IMR-90 (cell line): ENCODE measurements at regions of chr2 and their contacts with region 1.

Region 1: DNA sequence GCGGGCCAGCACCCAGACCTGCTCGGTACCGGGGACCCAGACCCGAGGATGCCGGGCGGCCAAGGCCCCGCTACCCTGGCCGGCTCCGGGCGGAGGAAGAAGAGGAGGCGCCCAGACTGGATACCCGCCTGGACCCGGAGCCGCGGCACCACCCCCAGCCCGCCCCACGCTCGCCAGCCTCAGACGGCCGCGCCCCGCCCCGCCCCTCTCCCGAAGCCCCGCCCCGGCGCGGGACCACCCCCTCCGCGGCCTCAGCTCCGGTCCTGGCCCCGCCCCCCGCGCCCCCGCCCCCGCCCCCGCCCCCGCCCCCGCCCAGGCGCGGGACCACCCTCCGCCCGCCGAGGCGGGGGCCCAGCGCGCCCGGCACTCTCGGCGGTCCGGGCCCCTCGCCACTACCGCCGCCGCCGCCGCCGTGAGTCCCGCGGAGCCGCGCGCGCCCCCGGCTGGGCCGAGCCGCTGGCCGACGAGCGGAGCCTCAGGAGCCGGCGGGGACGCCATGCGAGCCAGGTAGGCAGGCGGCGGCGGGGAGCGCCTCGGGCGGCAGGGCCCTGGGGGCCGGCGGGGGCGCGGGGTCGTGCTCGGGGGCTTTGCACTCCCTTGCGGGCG is at the start of gene SH3BP4:
- DNase-seq: peak; percentile 72
- ATAC-seq: peak; percentile 75
- H3K4me3 ChIP-seq: peak within 1 kb of the TSS; percentile 65
- H3K27ac ChIP-seq: peak within 1 kb of the TSS; percentile 99
- H3K4me1 ChIP-seq: peaks cover 33% of the 10 kb centered on the region
- H3K27me3 ChIP-seq: no peaks in the 10 kb centered on the region
- CTCF ChIP-seq: no peak
- POLR2A ChIP-seq: peak; percentile 91
- RAD21 ChIP-seq: peak; percentile 25; the same call in 1 of the 2 replicates
- total RNA-seq, gene SH3BP4: 112 and 122 TPM in 2 replicates

Region 2: DNA sequence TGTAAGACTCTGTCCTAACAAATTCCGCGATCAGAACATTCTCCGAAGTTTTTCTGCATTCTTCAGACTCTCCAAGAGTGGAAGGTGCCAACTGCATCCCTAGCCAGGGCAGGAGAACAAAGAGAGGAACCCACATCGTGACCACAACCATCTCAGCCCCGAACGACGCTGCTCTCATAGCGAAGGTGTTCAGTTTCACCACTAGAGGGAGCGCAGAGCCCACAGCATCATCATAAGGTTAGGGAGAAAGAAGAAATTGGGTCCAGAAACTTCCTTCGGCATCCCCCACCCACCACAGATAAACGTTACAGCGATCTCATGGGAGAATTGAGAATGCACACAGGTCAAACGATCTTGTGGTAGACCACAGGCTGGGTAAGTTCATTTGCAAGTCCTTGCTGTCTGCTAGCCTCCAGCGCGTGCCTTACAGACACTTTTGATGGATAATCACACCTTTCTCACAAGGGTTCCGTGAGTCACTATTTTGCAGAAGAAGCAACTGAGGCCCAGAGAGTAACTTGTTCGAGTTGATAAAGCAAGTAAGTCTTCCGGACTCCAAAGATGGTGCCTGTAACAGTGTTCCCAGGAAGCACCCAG is 401.2 kb before region 1 on chr2:
- CTCF ChIA-PET with region 1: no interaction called
- POLR2A ChIA-PET with region 1: no interaction called
- dilution Hi-C with region 1: no loop called
- in situ Hi-C with region 1: no loop called
- intact Hi-C with region 1: loop called (anchors 1 kb)
- DNase-seq: peak; percentile 86
- ATAC-seq: peak; percentile 96
- H3K4me3 ChIP-seq: no peak overlapping the region
- H3K27ac ChIP-seq: no peak overlapping the region
- H3K4me1 ChIP-seq: peaks cover 5% of the 10 kb centered on the region; the same call in 1 of the 2 replicates
- H3K27me3 ChIP-seq: no peaks in the 10 kb centered on the region; the same call in 1 of the 2 replicates
- CTCF ChIP-seq: peak; percentile 96
- POLR2A ChIP-seq: peak; percentile 47; the same call in 1 of the 2 replicates
- RAD21 ChIP-seq: peak; percentile 99

Region 3: DNA sequence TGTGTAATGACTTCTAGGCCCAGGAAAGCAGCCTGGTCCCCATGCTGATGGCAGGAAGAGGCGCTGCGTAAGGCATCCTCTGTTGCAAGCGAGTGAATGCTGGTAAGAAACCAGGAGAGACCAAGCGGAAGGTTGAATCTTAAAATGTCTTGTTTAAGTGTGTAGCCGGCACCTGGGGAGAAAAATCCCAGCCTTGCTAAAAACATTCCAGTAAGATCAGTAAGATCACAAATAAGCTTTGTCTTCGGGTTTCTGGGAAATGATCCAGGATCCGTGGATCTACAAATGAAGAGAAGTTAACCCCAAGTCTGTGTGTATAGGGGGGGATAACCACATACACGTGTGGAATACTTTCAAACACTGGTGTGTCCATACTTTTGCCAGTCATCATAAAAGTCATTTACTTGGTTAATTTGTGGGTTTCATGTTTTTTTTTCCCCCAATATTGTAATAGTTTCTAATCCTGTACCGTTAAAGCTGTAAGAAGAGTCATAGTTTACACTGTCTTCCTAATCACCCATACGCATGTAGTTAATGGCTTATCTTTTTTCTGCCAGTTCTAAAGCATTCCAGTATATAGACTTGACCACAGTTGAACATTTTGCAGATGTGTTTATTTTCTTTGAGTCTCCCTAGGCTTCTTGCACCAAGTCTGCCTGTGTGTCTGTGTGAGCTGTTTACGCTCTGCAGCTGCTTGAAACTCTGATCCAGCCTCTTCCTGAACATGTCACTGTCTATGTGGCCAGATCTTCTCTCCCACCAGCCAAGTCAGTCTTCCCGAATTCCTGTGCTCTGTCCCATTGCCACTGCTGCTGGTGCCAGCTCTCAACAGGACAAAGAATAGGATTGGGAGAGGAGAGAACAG is 319.0 kb before region 1 on chr2:
- CTCF ChIA-PET with region 1: no interaction called
- POLR2A ChIA-PET with region 1: no interaction called
- dilution Hi-C with region 1: no loop called
- in situ Hi-C with region 1: no loop called
- intact Hi-C with region 1: loop called (anchors 2 kb)
- DNase-seq: peak; percentile 100
- ATAC-seq: peak; percentile 91
- H3K4me3 ChIP-seq: no peak overlapping the region
- H3K27ac ChIP-seq: peak overlapping the region; percentile 97
- H3K4me1 ChIP-seq: peaks cover 33% of the 10 kb centered on the region
- H3K27me3 ChIP-seq: no peaks in the 10 kb centered on the region
- CTCF ChIP-seq: no peak
- POLR2A ChIP-seq: peak; percentile 48; the same call in 1 of the 2 replicates
- RAD21 ChIP-seq: no peak; the same call in 1 of the 2 replicates

Region 4: GRCh38 chr2:234679741-234680687 is 271.8 kb before region 1 on chr2:
- CTCF ChIA-PET with region 1: interaction called, 5 read pairs
- POLR2A ChIA-PET with region 1: interaction called, 8 read pairs
- dilution Hi-C with region 1: no loop called
- in situ Hi-C with region 1: no loop called
- intact Hi-C with region 1: loop called (anchors 2 kb)
- DNase-seq: peak; percentile 99
- ATAC-seq: peak; percentile 75
- H3K4me3 ChIP-seq: peak overlapping the region; percentile 5; the same call in 1 of the 2 replicates
- H3K27ac ChIP-seq: peak overlapping the region; percentile 90
- H3K4me1 ChIP-seq: peaks cover 34% of the 10 kb centered on the region
- H3K27me3 ChIP-seq: no peaks in the 10 kb centered on the region
- CTCF ChIP-seq: no peak
- POLR2A ChIP-seq: peak; percentile 73; the same call in 1 of the 2 replicates
- RAD21 ChIP-seq: peak; percentile 28

Region 5: DNA sequence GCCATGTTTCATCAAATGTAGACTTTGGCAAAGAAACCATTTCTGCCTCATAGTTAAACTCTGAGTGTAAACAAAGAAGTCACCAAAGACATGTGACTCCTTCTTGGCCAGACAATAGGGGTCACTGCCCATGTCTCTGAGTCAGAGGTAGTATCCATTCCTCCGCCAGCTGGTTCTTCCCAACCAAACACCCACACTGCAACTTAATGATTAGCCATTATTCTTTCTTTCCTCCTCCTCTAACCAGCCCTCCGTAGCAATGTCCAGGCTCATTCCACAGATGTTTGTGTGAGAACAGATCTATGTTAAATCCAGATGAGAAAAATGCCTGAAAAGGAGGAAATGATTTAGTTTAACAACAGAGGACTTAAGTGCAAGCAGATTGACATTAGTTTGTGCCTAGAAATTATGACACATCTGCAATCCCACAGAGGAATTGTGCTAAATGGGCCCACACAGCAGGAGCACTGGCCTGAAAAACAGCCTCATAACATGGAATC is 127.8 kb before region 1 on chr2:
- CTCF ChIA-PET with region 1: no interaction called
- POLR2A ChIA-PET with region 1: no interaction called
- dilution Hi-C with region 1: no loop called
- in situ Hi-C with region 1: no loop called
- intact Hi-C with region 1: loop called (anchors 2 kb)
- DNase-seq: peak; percentile 98
- ATAC-seq: peak; percentile 92
- H3K4me3 ChIP-seq: no peak overlapping the region
- H3K27ac ChIP-seq: peak overlapping the region; percentile 95
- H3K4me1 ChIP-seq: peaks cover 14% of the 10 kb centered on the region
- H3K27me3 ChIP-seq: no peaks in the 10 kb centered on the region
- CTCF ChIP-seq: no peak
- POLR2A ChIP-seq: no peak
- RAD21 ChIP-seq: no peak; the same call in 1 of the 2 replicates

Region 6: GRCh38 chr2:234981197-234982117 is 29.7 kb after region 1 on chr2:
- CTCF ChIA-PET with region 1: interaction called, 3 read pairs
- POLR2A ChIA-PET with region 1: interaction called, 6 read pairs
- dilution Hi-C with region 1: no loop called
- in situ Hi-C with region 1: no loop called
- intact Hi-C with region 1: loop called (anchors 2 kb)
- DNase-seq: peak; percentile 100
- ATAC-seq: peak; percentile 82
- H3K4me3 ChIP-seq: no peak overlapping the region
- H3K27ac ChIP-seq: peak overlapping the region; percentile 86
- H3K4me1 ChIP-seq: peaks cover 54% of the 10 kb centered on the region
- H3K27me3 ChIP-seq: no peaks in the 10 kb centered on the region
- CTCF ChIP-seq: peak; percentile 44
- POLR2A ChIP-seq: peak; percentile 71
- RAD21 ChIP-seq: peak; percentile 46

Region 7: DNA sequence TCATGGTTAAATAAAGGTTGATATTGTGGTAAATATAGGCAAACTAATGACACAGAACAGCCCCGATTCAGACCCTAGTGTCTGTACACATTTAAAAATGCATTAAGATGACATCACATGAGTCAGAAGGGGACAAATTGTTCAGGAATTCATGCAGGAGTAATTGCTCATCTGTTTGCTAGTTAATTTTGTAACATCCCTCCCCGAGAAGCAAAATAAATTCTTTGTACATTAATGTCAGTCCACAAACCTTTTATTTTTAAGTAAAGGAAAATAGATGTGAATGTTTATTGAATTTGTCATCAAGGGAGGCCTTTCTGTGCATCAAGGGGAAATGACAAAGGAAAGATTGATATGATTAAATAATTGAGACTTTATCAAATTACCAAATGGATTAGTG is 70.0 kb after region 1 on chr2:
- CTCF ChIA-PET with region 1: no interaction called
- POLR2A ChIA-PET with region 1: no interaction called
- dilution Hi-C with region 1: no loop called
- in situ Hi-C with region 1: no loop called
- intact Hi-C with region 1: loop called (anchors 2 kb)
- DNase-seq: peak; percentile 93
- ATAC-seq: peak; percentile 60
- H3K4me3 ChIP-seq: no peak overlapping the region
- H3K27ac ChIP-seq: peak overlapping the region; percentile 23; the same call in 1 of the 2 replicates
- H3K4me1 ChIP-seq: peaks cover 49% of the 10 kb centered on the region
- H3K27me3 ChIP-seq: no peaks in the 10 kb centered on the region
- CTCF ChIP-seq: no peak
- POLR2A ChIP-seq: no peak
- RAD21 ChIP-seq: no peak